Caco-2 (cell line): ENCODE measurements at regions of chr19 and their contacts with region 1.

Region 1: GRCh38 chr19:40570313-40571004 is 6.2 kb upstream of the SHKBP1 start:
- DNase-seq: peak; percentile 99 to 100
- H3K4me3 ChIP-seq: peak overlapping the region; percentile 39
- H3K4me3 Mint-ChIP-seq: peak overlapping the region; percentile 57
- H3K27ac Mint-ChIP-seq: peak overlapping the region; percentile 12
- H3K4me1 ChIP-seq: peaks cover 9% of the 10 kb centered on the region; the same call in 1 of the 2 replicates
- H3K4me1 Mint-ChIP-seq: peaks cover 13% of the 10 kb centered on the region
- H3K27me3 ChIP-seq: no peaks in the 10 kb centered on the region; the same call in 1 of the 2 replicates
- H3K27me3 Mint-ChIP-seq: peaks cover 5% of the 10 kb centered on the region
- CTCF ChIP-seq: no peak

Region 2: DNA sequence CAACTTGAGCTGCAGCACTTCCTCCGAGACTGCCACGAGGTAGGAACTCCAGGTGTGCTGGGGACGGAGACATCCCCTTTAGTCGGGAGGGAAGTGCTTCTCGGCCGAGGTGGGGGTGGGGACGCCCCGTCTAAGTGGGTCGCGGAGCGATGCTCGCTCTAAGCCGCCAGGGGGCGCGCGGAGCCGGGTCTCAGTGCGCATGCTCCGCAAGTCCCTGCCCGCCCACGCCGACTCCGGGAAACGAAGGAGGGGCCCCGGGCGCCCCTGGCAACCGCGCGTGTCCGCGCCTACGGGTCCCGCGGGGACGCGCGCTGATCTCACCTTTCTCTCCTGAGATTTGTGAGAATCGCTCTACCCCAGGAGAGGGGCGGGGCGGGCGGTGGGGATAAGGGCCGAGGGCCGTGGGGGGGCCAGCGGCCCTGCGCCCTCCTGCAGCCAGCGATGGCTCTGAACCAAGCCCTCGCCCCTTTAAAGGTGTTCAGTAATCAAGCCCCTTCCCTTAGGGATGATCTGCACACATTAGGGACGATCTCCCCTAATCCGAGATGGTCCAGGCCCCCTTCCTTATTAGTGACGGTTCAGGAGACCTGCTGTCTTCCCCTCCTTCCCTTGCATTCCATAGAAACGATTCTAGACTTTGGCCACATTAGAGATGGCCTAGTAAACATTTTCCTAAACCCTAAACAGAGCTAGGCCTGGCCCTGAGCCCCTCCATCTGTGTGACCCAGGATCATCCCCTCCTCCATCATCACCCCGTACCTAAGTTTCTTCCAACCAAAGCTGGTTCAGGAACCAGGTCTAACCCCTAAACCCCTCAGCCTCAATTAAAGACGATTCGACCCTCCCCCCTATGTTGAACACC is 41.1 kb before region 1 on chr19:
- CTCF ChIA-PET with region 1: interaction called, 11 read pairs
- POLR2A ChIA-PET with region 1: no interaction called
- intact Hi-C with region 1: no loop called
- DNase-seq: peak; percentile 85 to 91
- H3K4me3 ChIP-seq: peak overlapping the region; percentile 49
- H3K4me3 Mint-ChIP-seq: peak overlapping the region; percentile 72
- H3K27ac Mint-ChIP-seq: peak overlapping the region; percentile 19
- H3K4me1 ChIP-seq: peaks cover 12% of the 10 kb centered on the region
- H3K4me1 Mint-ChIP-seq: peaks cover 7% of the 10 kb centered on the region
- H3K27me3 ChIP-seq: no peaks in the 10 kb centered on the region
- H3K27me3 Mint-ChIP-seq: no peaks in the 10 kb centered on the region
- CTCF ChIP-seq: peak; percentile 94 to 98

Region 3: DNA sequence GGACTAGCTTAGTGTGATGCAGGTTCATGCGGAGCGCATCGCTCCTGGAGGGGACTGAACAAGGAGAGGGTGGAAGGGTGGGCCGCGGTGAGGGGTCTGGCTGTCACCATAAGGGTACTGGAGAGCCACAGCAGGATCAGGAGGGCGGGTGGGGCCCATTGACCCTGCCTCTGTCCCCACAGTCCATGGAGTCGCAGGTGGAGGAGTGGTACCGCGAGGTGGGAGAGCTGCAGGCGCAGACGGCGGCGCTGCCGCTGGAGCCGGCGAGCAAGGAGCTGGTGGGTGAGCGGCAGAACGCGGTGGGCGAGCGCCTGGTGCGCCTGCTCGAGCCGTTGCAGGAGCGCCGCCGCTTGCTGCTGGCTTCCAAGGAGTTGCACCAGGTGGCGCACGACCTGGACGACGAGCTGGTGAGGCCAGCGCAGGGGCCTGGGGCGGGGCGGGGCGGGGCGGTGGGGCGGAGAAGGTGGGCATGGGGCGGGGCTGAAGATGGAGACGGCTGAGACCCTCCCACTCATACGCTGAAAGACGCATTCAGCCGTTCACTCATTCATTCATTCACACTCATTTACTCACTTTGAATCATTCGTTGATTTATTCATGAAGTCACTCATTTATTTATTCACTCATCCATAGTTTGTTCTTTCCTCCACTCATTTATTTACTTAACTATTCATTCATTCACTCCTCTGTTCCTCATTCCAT is 21.3 kb before region 1 on chr19:
- CTCF ChIA-PET with region 1: interaction called, 6 read pairs
- POLR2A ChIA-PET with region 1: no interaction called
- intact Hi-C with region 1: loop called (anchors 1 kb)
- DNase-seq: peak; percentile 83 to 88
- H3K4me3 ChIP-seq: peak overlapping the region; percentile 6; the same call in 1 of the 2 replicates
- H3K4me3 Mint-ChIP-seq: peak overlapping the region; percentile 62
- H3K27ac Mint-ChIP-seq: no peak overlapping the region
- H3K4me1 ChIP-seq: 0 out of 2 replicates have a peak, but pooled peaks cover 10% of the 10 kb centered on the region
- H3K4me1 Mint-ChIP-seq: peaks cover 7% of the 10 kb centered on the region
- H3K27me3 ChIP-seq: no peaks in the 10 kb centered on the region; the same call in 1 of the 2 replicates
- H3K27me3 Mint-ChIP-seq: peaks cover 8% of the 10 kb centered on the region
- CTCF ChIP-seq: peak; percentile 54 to 71